ENCODE measurements at regions of chr10 and their contacts with region 1.

Region 1: GRCh38 chr10:113473851-113474250 is 79.0 kb upstream of the HABP2 start:
- DNase-seq: no peak
- ATAC-seq: no peak
- H3K4me3 ChIP-seq: no peak overlapping the region
- H3K27ac ChIP-seq: no peak overlapping the region
- H3K4me1 ChIP-seq: no peaks in the 10 kb centered on the region
- H3K27me3 ChIP-seq: peaks cover 5% of the 10 kb centered on the region
- CTCF ChIP-seq: no peak

Region 2: GRCh38 chr10:113409175-113409574 is 64.7 kb before region 1 on chr10:
- CTCF ChIA-PET with region 1: no interaction called
- POLR2A ChIA-PET with region 1: no interaction called
- in situ Hi-C with region 1: no loop called
- intact Hi-C with region 1: no loop called
- DNase-seq: no peak
- ATAC-seq: no peak
- H3K4me3 ChIP-seq: no peak overlapping the region
- H3K27ac ChIP-seq: no peak overlapping the region
- H3K4me1 ChIP-seq: no peaks in the 10 kb centered on the region
- H3K27me3 ChIP-seq: peaks cover 13% of the 10 kb centered on the region
- CTCF ChIP-seq: no peak

Region 3: DNA sequence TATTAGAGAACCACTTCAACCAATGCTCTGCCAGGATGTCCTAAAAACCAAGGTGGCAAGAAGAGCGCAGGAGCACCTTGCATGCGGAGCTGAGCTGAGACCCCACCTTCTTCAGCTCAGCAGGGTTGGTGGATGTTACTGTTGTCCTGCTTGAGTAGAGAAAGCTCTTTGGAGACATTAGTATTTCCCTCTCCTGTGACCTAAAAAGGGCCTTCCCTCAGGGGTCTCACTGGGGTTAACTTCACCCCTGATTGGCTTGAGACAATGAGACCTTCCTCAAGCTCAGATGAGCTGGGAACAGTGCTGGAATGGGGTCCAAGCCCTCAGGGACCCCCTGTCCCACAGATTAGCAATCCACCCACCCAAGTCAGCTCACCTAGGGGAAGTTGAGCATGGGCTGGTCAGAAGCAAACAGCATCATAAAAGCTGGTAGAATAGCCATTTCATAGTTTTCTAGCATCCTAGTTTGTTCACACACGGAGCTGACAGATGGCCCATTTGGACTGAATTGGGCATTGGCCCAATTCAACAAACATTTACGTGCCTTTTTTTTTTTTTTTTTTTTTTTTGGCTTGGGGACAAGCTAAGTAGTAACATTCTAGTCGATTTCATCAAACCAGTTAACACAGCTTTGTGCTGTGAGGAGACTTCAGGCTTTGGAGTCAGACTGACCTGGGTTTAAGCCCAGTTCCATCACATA is 21.6 kb before region 1 on chr10:
- CTCF ChIA-PET with region 1: no interaction called
- POLR2A ChIA-PET with region 1: interaction called, 10 read pairs
- in situ Hi-C with region 1: no loop called
- intact Hi-C with region 1: no loop called
- DNase-seq: no peak
- ATAC-seq: no peak
- H3K4me3 ChIP-seq: no peak overlapping the region
- H3K27ac ChIP-seq: no peak overlapping the region
- H3K4me1 ChIP-seq: no peaks in the 10 kb centered on the region
- H3K27me3 ChIP-seq: peaks cover 45% of the 10 kb centered on the region
- CTCF ChIP-seq: no peak

Measured in Panc1 (cell line).